GM12878 (cell line): ENCODE measurements at regions of chr10 and their contacts with region 1.

Region 1: GRCh38 chr10:119080521-119081260 is at the start of gene EIF3A:
- DNase-seq: peak; percentile 75
- ATAC-seq: peak; percentile 87
- H3K4me3 ChIP-seq: peak within 1 kb of the TSS; percentile 83
- H3K27ac ChIP-seq: peak within 1 kb of the TSS; percentile 94
- H3K4me1 ChIP-seq: peaks cover 11% of the 10 kb centered on the region; the same call in 1 of the 2 replicates
- H3K27me3 ChIP-seq: no peaks in the 10 kb centered on the region
- CTCF ChIP-seq: no peak
- EP300 ChIP-seq: no peak
- POLR2A ChIP-seq: peak; percentile 93
- RAD21 ChIP-seq: no peak
- polyA plus RNA-seq, gene EIF3A: 42.3 to 46.5 TPM

Region 2: DNA sequence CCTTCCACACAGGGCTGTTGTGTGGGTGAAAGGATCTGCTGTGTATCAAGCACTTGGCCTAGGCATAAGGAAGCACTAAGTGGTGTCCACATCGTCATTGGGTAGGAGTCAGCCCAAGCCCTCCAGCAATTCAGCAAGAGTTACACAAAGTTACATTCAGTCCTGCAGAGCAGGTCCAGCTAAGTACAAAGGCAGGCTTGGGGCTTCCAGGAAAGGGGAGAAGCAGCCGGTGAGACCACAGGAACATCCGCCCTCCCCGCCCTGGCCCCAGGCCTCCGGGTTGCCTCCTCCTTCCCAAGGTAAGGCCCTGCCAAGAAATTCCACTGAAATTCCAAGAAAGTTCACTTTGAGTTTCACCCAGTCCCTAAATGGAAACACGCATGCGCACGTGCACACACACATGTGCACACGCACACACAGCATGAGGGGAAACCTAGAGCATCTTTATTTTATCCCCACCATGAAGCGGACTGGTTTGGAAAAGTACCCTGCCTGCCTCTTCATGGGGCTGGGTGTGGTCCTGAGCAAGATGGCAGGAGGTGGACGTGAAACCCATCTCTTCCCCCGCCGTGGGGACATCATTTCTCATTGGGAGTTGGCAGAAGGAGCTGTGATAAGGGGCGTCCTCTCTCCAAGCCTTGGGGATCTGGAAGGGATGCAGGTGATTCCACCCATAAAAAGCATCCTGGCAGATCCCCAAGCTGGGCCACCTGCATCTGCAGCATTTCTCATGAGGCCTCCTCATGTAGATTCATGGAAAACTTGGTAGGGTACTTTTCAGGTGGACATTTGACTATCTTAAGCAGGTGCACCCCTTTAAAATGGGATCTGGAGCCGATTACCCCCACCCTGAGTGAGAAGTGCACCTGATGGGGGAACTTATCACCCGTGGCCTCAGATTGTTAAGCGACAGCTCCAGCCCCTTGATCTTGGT is 120.3 kb before region 1 on chr10:
- CTCF ChIA-PET with region 1: no interaction called
- POLR2A ChIA-PET with region 1: no interaction called
- RAD21 ChIA-PET with region 1: no interaction called
- SMC1A ChIA-PET with region 1: no interaction called
- in situ Hi-C with region 1: no loop called
- intact Hi-C with region 1: no loop called
- DNase-seq: no peak
- ATAC-seq: no peak
- H3K4me3 ChIP-seq: no peak overlapping the region
- H3K27ac ChIP-seq: no peak overlapping the region
- H3K4me1 ChIP-seq: no peaks in the 10 kb centered on the region
- H3K27me3 ChIP-seq: peaks cover 0 to 2% of the 10 kb centered on the region in 2 experiments; a peak in 2 of 4 replicates
- CTCF ChIP-seq: no peak
- EP300 ChIP-seq: no peak
- POLR2A ChIP-seq: no peak
- RAD21 ChIP-seq: no peak

Region 3: DNA sequence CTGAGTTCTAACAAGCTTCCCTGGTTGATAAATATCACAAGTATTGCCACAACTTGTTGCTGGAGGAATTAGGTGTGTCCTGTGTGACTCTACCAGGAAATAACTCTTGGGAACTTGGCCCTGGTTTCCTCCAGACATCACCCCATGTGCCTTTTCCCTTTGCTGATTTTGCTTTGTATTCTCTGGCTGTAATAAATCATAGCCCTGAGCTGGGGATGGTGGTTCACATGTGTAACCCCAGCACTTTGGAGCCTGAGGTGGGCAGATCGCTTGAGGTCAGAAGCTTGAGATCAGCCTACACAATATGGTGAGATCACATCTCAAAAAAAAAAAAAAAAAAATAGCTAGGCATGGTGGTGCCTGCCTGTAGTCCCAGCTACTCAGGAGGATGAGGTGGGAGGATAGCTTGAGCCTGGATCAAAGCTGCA is 20.1 kb after region 1 on chr10:
- CTCF ChIA-PET with region 1: interaction called, 4 read pairs
- POLR2A ChIA-PET with region 1: interaction called, 11 read pairs
- RAD21 ChIA-PET with region 1: interaction called, 6 read pairs
- SMC1A ChIA-PET with region 1: interaction called, 9 read pairs
- in situ Hi-C with region 1: no loop called
- intact Hi-C with region 1: no loop called
- DNase-seq: no peak
- ATAC-seq: no peak
- H3K4me3 ChIP-seq: no peak overlapping the region
- H3K27ac ChIP-seq: no peak overlapping the region
- H3K4me1 ChIP-seq: peaks cover 5% of the 10 kb centered on the region
- H3K27me3 ChIP-seq: no peaks in the 10 kb centered on the region
- CTCF ChIP-seq: no peak
- EP300 ChIP-seq: no peak
- POLR2A ChIP-seq: no peak
- RAD21 ChIP-seq: no peak

Region 4: GRCh38 chr10:119120413-119120867 is 39.7 kb after region 1 on chr10:
- CTCF ChIA-PET with region 1: interaction called, 4 read pairs
- POLR2A ChIA-PET with region 1: interaction called, 4 read pairs
- RAD21 ChIA-PET with region 1: interaction called, 4 read pairs
- SMC1A ChIA-PET with region 1: interaction called, 4 read pairs
- in situ Hi-C with region 1: no loop called
- intact Hi-C with region 1: loop called (anchors 5 kb)
- DNase-seq: peak; percentile 88
- ATAC-seq: peak; percentile 95
- H3K4me3 ChIP-seq: no peak overlapping the region; the same call in 1 of the 2 replicates
- H3K27ac ChIP-seq: peak overlapping the region; percentile 43
- H3K4me1 ChIP-seq: peaks cover 16% of the 10 kb centered on the region
- H3K27me3 ChIP-seq: no peaks in the 10 kb centered on the region
- CTCF ChIP-seq: no peak
- EP300 ChIP-seq: peak; percentile 66 to 74; a peak in 3 of 4 replicates
- POLR2A ChIP-seq: no peak
- RAD21 ChIP-seq: no peak

Region 5: GRCh38 chr10:119131512-119132240 is 51.0 kb after region 1 on chr10:
- CTCF ChIA-PET with region 1: no interaction called
- POLR2A ChIA-PET with region 1: no interaction called
- RAD21 ChIA-PET with region 1: interaction called, 12 read pairs
- SMC1A ChIA-PET with region 1: interaction called, 5 read pairs
- in situ Hi-C with region 1: no loop called
- intact Hi-C with region 1: no loop called
- DNase-seq: peak; percentile 45
- ATAC-seq: peak; percentile 94
- H3K4me3 ChIP-seq: peak overlapping the region; percentile 24
- H3K27ac ChIP-seq: peak overlapping the region; percentile 76
- H3K4me1 ChIP-seq: peaks cover 14% of the 10 kb centered on the region
- H3K27me3 ChIP-seq: no peaks in the 10 kb centered on the region
- CTCF ChIP-seq: no peak
- EP300 ChIP-seq: no peak
- POLR2A ChIP-seq: peak; percentile 61
- RAD21 ChIP-seq: no peak

Region 6: DNA sequence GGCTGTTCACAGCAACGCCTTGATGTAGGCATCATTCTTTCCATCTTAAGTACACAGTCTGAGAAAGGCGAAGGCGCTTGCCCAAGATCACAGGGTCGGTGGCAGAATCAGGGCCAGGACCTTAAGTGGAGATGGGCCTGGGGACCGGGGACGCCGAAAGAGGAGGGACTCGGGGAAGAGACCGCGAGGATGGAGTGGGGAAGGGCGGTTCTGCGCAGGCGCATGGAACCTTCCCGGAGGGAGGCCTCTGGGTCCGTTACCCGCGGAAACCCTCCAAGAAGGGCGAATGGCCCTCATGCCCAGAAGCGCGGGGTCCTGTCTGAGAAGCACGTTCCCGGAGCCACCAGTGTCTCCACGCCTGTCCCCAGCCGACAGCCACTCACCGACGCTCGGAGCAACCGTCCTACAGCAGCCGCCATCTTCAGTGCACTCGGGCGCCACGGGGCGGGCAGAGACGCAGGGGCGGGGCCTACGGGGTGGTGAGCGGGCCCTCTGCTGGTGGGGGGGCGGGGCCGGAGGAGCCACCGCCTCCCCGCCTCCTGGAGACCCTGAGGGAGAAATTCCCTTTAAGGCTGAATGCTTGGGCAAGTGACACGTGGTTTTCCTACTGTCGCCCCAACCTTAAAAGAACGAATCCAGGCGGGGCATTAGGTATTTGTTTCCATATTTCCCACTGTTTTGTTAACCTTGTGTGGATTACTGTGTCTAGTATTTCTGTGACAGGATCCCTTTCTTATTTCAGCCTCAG is 97.9 kb after region 1 on chr10 and contains the start of gene PRDX3:
- CTCF ChIA-PET with region 1: interaction called, 3 read pairs
- POLR2A ChIA-PET with region 1: no interaction called
- RAD21 ChIA-PET with region 1: interaction called, 3 read pairs
- SMC1A ChIA-PET with region 1: no interaction called
- in situ Hi-C with region 1: no loop called
- intact Hi-C with region 1: loop called (anchors 2 kb)
- DNase-seq: peak; percentile 72
- ATAC-seq: peak; percentile 98
- H3K4me3 ChIP-seq: peak within 1 kb of the TSS; percentile 100
- H3K27ac ChIP-seq: peak within 1 kb of the TSS; percentile 74
- H3K4me1 ChIP-seq: peaks cover 14% of the 10 kb centered on the region
- H3K27me3 ChIP-seq: no peaks in the 10 kb centered on the region
- CTCF ChIP-seq: peak in 1 of 3 experiments; percentile 6; a peak in 2 of 6 replicates
- EP300 ChIP-seq: no peak
- POLR2A ChIP-seq: peak; percentile 99
- RAD21 ChIP-seq: no peak
- polyA plus RNA-seq, gene PRDX3: 827 to 1,431 TPM

Region 7: GRCh38 chr10:119305860-119306513 is 225.3 kb after region 1 on chr10:
- CTCF ChIA-PET with region 1: no interaction called
- POLR2A ChIA-PET with region 1: no interaction called
- RAD21 ChIA-PET with region 1: no interaction called
- SMC1A ChIA-PET with region 1: no interaction called
- in situ Hi-C with region 1: no loop called
- intact Hi-C with region 1: loop called (anchors 10 kb)
- DNase-seq: peak; percentile 81
- ATAC-seq: peak; percentile 85
- H3K4me3 ChIP-seq: peak overlapping the region; percentile 69
- H3K27ac ChIP-seq: peak overlapping the region; percentile 92
- H3K4me1 ChIP-seq: peaks cover 78% of the 10 kb centered on the region
- H3K27me3 ChIP-seq: no peaks in the 10 kb centered on the region
- CTCF ChIP-seq: no peak
- EP300 ChIP-seq: peak; percentile 22 to 29; a peak in 1 of 4 replicates
- POLR2A ChIP-seq: peak; percentile 65
- RAD21 ChIP-seq: 0 out of 2 replicates have a peak, but pooled peaks have one; percentile 5

Region 8: GRCh38 chr10:119596537-119597404 is 516.1 kb after region 1 on chr10 and contains the start of gene TIAL1:
- CTCF ChIA-PET with region 1: no interaction called
- POLR2A ChIA-PET with region 1: no interaction called
- RAD21 ChIA-PET with region 1: no interaction called
- SMC1A ChIA-PET with region 1: interaction called, 3 read pairs
- in situ Hi-C with region 1: no loop called
- intact Hi-C with region 1: loop called (anchors 10 kb)
- DNase-seq: peak; percentile 98
- ATAC-seq: peak; percentile 86
- H3K4me3 ChIP-seq: peak within 1 kb of the TSS; percentile 83
- H3K27ac ChIP-seq: peak within 1 kb of the TSS; percentile 97
- H3K4me1 ChIP-seq: peaks cover 7% of the 10 kb centered on the region; the same call in 1 of the 2 replicates
- H3K27me3 ChIP-seq: no peaks in the 10 kb centered on the region
- CTCF ChIP-seq: no peak
- EP300 ChIP-seq: no peak
- POLR2A ChIP-seq: peak; percentile 81
- RAD21 ChIP-seq: no peak
- polyA plus RNA-seq, gene TIAL1: 26.0 to 68.2 TPM